ENCODE measurements at regions of chr3 and their contacts with region 1.

Region 1: GRCh38 chr3:101518421-101518871 is 5.4 kb upstream of the SENP7 start:
- DNase-seq: peak; percentile 71
- H3K4me3 Mint-ChIP-seq: peak overlapping the region; percentile 73
- H3K27ac Mint-ChIP-seq: peak overlapping the region; percentile 97
- H3K4me1 Mint-ChIP-seq: peaks cover 61% of the 10 kb centered on the region
- H3K27me3 Mint-ChIP-seq: no peaks in the 10 kb centered on the region

Region 2: GRCh38 chr3:100708967-100709841 is 809.2 kb before region 1 on chr3 and contains the start of gene TFG:
- CTCF ChIA-PET with region 1: no interaction called
- intact Hi-C with region 1: loop called (anchors 1 kb)
- DNase-seq: peak; percentile 98
- H3K4me3 Mint-ChIP-seq: peak within 1 kb of the TSS; percentile 83
- H3K27ac Mint-ChIP-seq: peak within 1 kb of the TSS; percentile 97
- H3K4me1 Mint-ChIP-seq: peaks cover 39% of the 10 kb centered on the region
- H3K27me3 Mint-ChIP-seq: peaks cover 6% of the 10 kb centered on the region
- total RNA-seq, gene TFG: 45.6 to 46.0 TPM

Region 3: DNA sequence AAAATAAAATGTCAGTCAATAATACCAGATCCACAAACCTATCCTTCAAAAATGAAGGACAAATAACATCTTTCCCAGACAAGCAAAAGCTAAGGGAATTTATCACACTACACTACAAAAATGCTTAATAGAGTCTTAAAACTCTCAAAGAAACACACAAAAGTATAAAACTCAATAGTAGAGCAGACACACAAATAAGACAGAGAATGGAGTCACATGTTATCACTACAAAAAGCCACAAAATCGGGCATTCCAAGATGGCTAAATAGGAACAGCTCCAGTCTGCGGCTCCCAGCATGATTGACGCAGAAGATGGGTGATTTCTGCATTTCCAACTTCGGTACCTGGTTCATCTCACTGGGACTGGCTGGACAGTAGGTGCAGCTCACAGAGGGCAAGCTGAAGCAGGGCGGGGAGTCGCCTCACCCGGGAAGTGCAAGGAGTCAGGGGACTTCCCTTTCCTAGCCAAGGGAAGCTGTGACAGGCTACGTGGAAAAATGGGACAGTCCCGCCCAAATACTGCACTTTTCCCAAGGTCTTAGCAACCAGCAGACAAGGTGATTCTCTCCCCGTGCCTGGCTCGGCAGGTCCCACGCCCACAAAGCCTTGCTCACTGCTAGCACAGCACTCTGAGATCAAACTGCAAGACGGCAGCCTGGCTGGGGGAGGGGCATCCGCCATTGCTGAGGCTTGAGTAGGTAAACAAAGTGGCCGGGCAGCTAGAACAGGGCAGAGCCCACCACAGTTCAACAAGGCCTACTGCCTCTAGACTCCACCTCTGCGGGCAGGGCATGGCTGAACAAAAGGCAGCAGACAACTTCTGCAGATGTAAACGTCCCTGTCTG is 51.8 kb before region 1 on chr3:
- CTCF ChIA-PET with region 1: no interaction called
- intact Hi-C with region 1: loop called (anchors 1 kb)
- DNase-seq: peak; percentile 90
- H3K4me3 Mint-ChIP-seq: peak overlapping the region; percentile 71
- H3K27ac Mint-ChIP-seq: peak overlapping the region; percentile 88
- H3K4me1 Mint-ChIP-seq: peaks cover 57% of the 10 kb centered on the region
- H3K27me3 Mint-ChIP-seq: no peaks in the 10 kb centered on the region

Region 4: DNA sequence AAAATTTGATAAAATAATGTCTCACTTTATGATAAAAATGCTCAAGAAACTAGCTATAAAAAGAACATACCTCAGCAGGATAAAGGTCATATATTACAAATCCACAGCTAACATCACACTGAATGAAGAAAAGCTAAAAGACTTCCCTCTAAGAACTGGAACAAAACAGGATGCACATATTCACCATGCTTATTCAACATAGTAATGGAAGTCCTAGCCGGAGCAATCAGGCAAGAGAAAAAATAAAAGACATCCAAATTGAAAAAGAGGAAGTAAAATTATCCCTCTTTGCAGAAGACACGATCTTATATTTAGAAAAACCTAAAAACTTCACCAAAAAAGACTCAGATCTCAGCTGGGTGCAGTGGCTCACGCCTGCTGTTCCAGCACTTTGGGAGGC is 39.5 kb before region 1 on chr3:
- CTCF ChIA-PET with region 1: no interaction called
- intact Hi-C with region 1: no loop called
- DNase-seq: no peak
- H3K4me3 Mint-ChIP-seq: no peak overlapping the region
- H3K27ac Mint-ChIP-seq: no peak overlapping the region
- H3K4me1 Mint-ChIP-seq: peaks cover 45% of the 10 kb centered on the region
- H3K27me3 Mint-ChIP-seq: no peaks in the 10 kb centered on the region

Region 5: GRCh38 chr3:101544161-101544850 is 25.9 kb after region 1 on chr3:
- CTCF ChIA-PET with region 1: interaction called, 9 read pairs
- intact Hi-C with region 1: loop called (anchors 1 kb)
- DNase-seq: no peak
- H3K4me3 Mint-ChIP-seq: no peak overlapping the region
- H3K27ac Mint-ChIP-seq: no peak overlapping the region
- H3K4me1 Mint-ChIP-seq: peaks cover 29% of the 10 kb centered on the region
- H3K27me3 Mint-ChIP-seq: no peaks in the 10 kb centered on the region

Region 6: GRCh38 chr3:101643861-101644613 is 125.6 kb after region 1 on chr3:
- CTCF ChIA-PET with region 1: no interaction called
- intact Hi-C with region 1: loop called (anchors 1 kb)
- DNase-seq: peak; percentile 69
- H3K4me3 Mint-ChIP-seq: no peak overlapping the region
- H3K27ac Mint-ChIP-seq: peak overlapping the region; percentile 83
- H3K4me1 Mint-ChIP-seq: peaks cover 24% of the 10 kb centered on the region
- H3K27me3 Mint-ChIP-seq: no peaks in the 10 kb centered on the region

Region 7: DNA sequence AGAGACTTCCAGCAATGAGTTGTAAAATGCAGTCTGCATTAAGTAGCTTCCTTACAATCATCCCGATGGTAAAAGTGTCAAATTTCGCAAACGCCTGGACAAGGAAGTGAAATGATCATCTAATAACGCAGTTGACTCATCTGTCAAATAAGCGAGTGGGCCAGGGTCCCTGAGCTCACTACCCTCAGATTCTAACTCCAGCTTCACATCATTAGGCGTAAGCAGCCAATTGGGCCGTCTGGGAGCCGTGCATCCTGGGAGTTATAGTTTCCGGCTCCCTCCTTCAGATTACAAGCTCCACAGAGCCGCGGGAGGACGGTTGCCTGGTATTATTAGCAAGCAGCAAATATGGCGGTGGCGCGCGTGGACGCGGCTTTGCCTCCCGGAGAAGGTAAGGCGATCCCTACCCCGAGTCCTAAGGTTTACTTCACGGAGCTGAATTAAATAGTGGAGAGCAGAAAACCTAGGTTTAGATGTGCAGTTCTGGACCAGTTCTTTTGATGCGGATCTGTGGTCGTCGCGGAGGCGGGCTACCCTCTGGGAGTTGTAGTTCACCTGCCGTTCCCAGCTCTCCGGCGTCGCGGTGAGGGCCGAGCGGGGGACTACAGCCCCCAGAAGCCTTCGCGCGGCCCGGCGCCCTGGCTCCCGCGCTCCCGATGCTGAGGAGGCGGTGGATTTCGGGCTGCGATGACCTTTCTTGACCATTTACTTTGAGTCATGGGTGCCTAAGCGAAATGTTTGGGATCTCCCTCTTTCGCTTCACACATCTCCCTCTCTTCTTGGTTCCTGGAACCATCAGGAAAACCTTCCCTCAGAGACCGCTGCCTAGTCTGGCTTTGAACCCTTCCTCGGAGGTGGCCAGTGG is 206.1 kb after region 1 on chr3 and contains the start of gene CEP97:
- CTCF ChIA-PET with region 1: no interaction called
- intact Hi-C with region 1: loop called (anchors 1 kb)
- DNase-seq: peak; percentile 94
- H3K4me3 Mint-ChIP-seq: peak within 1 kb of the TSS; percentile 97
- H3K27ac Mint-ChIP-seq: peak within 1 kb of the TSS; percentile 97
- H3K4me1 Mint-ChIP-seq: peaks cover 33% of the 10 kb centered on the region
- H3K27me3 Mint-ChIP-seq: no peaks in the 10 kb centered on the region
- total RNA-seq, gene CEP97: 17.0 to 20.3 TPM

Region 8: GRCh38 chr3:101784855-101785613 is 266.6 kb after region 1 on chr3:
- CTCF ChIA-PET with region 1: no interaction called
- intact Hi-C with region 1: no loop called
- DNase-seq: no peak
- H3K4me3 Mint-ChIP-seq: peak overlapping the region; percentile 62
- H3K27ac Mint-ChIP-seq: peak overlapping the region; percentile 90
- H3K4me1 Mint-ChIP-seq: peaks cover 70% of the 10 kb centered on the region
- H3K27me3 Mint-ChIP-seq: no peaks in the 10 kb centered on the region

Region 9: GRCh38 chr3:101936419-101937356 is 418.2 kb after region 1 on chr3:
- CTCF ChIA-PET with region 1: no interaction called
- intact Hi-C with region 1: loop called (anchors 1 kb)
- DNase-seq: peak; percentile 33
- H3K4me3 Mint-ChIP-seq: peak overlapping the region; percentile 0
- H3K27ac Mint-ChIP-seq: peak overlapping the region; percentile 57
- H3K4me1 Mint-ChIP-seq: peaks cover 32% of the 10 kb centered on the region
- H3K27me3 Mint-ChIP-seq: peaks cover 2% of the 10 kb centered on the region

Measured in activated naive CD4-positive, alpha-beta T cell treated with anti-CD3 and anti-CD28 coated beads for 36 hours (primary cell).